ENCODE measurements at regions of chr10 and their contacts with region 1.

Region 1: GRCh38 chr10:104614245-104614831 is 26.8 kb upstream of the SORCS3 start:
- DNase-seq: peak; percentile 29
- ATAC-seq: peak; percentile 92
- H3K4me3 ChIP-seq: no peak overlapping the region
- H3K27ac ChIP-seq: no peak overlapping the region
- H3K4me1 ChIP-seq: no peaks in the 10 kb centered on the region
- H3K27me3 ChIP-seq: peaks cover 42% of the 10 kb centered on the region; the same call in 1 of the 2 replicates
- CTCF ChIP-seq: peak; percentile 76 to 85 (median 77)
- POLR2A ChIP-seq: no peak
- RAD21 ChIP-seq: peak; percentile 76

Region 2: DNA sequence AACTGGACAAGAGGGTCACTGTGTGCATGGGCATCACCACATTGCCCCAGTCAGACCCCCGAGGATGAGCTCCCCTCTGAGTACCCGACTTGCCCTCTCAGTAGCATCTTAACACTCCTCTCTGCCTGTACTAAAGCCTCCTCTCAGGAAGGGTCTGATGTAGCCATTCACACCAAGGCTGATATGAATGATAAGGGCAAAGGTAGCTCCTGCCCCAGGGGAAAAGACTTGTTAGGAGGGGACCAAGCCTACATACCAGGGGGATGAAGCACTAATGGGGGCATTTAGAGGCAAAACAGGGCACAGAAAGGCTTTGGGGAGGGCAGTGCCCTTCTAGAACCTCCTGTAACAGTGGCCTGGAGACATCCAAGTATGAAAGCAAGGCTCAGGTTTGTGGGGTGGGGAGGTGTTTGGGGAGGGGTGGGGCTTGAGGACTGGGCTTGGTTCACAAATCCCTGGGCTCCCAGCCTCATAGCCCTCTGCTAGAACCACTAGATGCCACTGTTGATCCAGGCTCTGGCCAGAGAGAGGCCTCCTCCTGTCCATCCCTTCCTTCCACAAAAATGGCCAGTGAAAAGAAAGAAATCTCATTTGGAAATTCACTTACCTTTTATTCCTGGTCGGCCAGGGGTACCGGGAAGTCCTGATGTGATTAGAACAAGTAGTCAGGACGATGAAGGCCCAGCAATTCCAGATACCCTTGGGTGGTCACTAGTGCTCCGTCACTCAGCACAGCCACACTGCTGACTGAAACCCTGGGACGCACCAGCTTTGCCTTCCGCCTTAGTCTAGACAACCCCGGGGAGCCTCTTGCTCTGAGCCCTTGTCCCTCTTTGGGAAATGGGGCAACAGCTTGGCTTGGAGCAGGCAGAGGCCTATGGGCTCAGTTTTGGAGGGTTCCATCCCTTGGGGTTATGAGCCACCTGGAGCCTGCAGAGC is 568.9 kb before region 1 on chr10:
- CTCF ChIA-PET with region 1: no interaction called
- POLR2A ChIA-PET with region 1: no interaction called
- RAD21 ChIA-PET with region 1: no interaction called
- intact Hi-C with region 1: loop called (anchors 1 kb)
- DNase-seq: peak; percentile 74
- ATAC-seq: peak; percentile 93
- H3K4me3 ChIP-seq: no peak overlapping the region
- H3K27ac ChIP-seq: no peak overlapping the region
- H3K4me1 ChIP-seq: peaks cover 15 to 38% of the 10 kb centered on the region in 2 experiments
- H3K27me3 ChIP-seq: no peaks in the 10 kb centered on the region
- CTCF ChIP-seq: peak in 2 of 3 experiments; percentile 90 to 94; a peak in 4 of 6 replicates
- POLR2A ChIP-seq: no peak
- RAD21 ChIP-seq: no peak

Region 3: GRCh38 chr10:104406715-104407650 is 207.4 kb before region 1 on chr10:
- CTCF ChIA-PET with region 1: interaction called, 37 read pairs
- POLR2A ChIA-PET with region 1: no interaction called
- RAD21 ChIA-PET with region 1: interaction called, 3 to 4 read pairs
- intact Hi-C with region 1: loop called (anchors 1 kb)
- DNase-seq: peak; percentile 57
- ATAC-seq: peak; percentile 86
- H3K4me3 ChIP-seq: no peak overlapping the region
- H3K27ac ChIP-seq: no peak overlapping the region
- H3K4me1 ChIP-seq: no peaks in the 10 kb centered on the region
- H3K27me3 ChIP-seq: peaks cover 72% of the 10 kb centered on the region
- CTCF ChIP-seq: peak; percentile 65 to 80 (median 71); a peak in 5 of 6 replicates
- POLR2A ChIP-seq: no peak
- RAD21 ChIP-seq: peak; percentile 84

Region 4: DNA sequence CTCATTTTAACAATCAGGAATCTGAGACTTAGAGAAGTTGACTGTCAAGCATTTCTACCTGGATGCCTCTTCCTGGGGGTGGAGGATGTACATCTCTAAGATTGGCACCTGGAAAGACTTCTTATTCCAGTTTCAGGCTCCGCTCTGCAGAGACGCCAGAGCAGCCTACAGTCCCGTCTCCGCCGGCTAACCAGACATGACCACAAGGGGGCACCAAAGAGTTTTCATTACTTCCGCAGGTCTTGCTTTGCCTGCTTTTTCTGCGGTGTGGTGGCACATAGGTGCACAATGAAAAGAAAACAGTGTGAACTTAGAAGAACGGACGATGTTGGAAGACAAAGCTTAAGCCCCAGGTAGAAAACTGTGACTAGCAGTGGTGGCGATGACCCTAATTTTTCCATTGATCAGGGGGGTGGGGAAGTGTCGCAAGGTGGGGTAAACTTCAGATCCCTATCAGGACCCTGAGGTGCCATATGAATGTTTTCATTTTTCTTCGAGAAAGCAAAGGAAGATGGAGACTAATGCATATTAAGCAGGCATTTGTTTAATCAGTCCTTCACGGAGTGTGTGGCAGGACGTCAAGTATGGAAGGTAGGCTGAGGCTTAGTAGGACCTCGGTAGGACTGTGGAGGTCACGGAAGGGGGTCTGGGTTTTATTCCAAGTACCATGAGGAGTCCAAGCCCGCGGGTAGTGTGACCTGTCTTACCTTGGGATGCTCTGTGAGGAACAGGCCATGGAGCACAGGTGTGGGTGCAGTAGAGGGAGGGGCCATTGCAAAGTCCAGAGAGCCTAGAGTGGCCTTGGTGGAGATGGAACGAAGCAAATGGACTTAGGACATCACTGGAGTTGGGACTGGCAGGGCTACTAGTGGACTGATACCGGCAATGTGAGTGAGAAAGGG is 33.3 kb before region 1 on chr10:
- CTCF ChIA-PET with region 1: interaction called, 13 read pairs
- POLR2A ChIA-PET with region 1: no interaction called
- RAD21 ChIA-PET with region 1: interaction called in 1 of 2 experiments, 4 read pairs
- intact Hi-C with region 1: loop called (anchors 1 kb)
- DNase-seq: peak; percentile 64
- ATAC-seq: peak; percentile 94
- H3K4me3 ChIP-seq: no peak overlapping the region
- H3K27ac ChIP-seq: no peak overlapping the region
- H3K4me1 ChIP-seq: peaks cover 0 to 4% of the 10 kb centered on the region in 2 experiments; a peak in 1 of 4 replicates
- H3K27me3 ChIP-seq: peaks cover 38% of the 10 kb centered on the region
- CTCF ChIP-seq: peak; percentile 80 to 99 (median 95)
- POLR2A ChIP-seq: no peak
- RAD21 ChIP-seq: peak; percentile 87

Region 5: GRCh38 chr10:104589871-104590270 is 24.5 kb before region 1 on chr10:
- CTCF ChIA-PET with region 1: interaction called, 13 read pairs
- POLR2A ChIA-PET with region 1: no interaction called
- RAD21 ChIA-PET with region 1: no interaction called
- intact Hi-C with region 1: no loop called
- DNase-seq: peak; percentile 13
- ATAC-seq: peak; percentile 84
- H3K4me3 ChIP-seq: no peak overlapping the region
- H3K27ac ChIP-seq: no peak overlapping the region
- H3K4me1 ChIP-seq: peaks cover 0 to 7% of the 10 kb centered on the region in 2 experiments; a peak in 2 of 4 replicates
- H3K27me3 ChIP-seq: peaks cover 88% of the 10 kb centered on the region
- CTCF ChIP-seq: no peak
- POLR2A ChIP-seq: no peak
- RAD21 ChIP-seq: no peak

Measured in HCT116 (cell line).